GM10248 (cell line): ENCODE measurements at regions of chr2 and their contacts with region 1.

Region 1: DNA sequence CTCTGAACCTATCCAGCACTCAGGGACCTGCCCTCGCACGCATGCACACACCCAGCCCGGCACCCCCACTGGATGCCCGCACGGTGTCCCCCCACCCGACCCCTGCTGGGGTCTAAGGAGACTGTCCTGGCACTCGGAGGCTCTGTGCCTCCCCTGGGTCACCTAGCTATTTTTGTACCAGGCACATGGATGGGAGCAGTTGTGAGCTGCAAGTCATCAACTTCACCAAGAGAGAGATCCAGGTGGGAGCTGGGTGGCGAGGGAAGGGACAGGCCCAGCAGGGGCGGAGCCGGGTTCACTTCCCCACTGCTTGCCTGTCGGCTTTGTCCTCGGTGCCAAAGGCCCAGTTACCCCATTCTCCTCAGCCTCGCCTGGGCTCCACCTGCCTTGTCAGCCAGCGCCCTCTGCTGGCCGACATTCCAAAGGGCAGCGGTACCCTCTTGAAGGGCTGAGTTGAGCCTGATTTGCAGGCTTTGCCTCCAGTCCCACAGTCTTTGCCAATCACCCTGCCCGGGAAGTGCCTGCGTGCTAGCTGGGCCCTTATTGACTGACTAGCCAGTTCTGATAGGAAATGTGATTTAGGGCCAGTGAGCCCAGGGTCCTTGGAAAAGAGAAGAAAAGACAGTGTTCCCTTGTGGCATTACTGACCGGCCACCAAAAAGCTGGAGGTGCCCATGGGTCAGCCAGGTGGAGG is 5.8 kb downstream of the NT5DC4 start:
- DNase-seq: peak; percentile 93
- CTCF ChIP-seq: peak; percentile 99

Region 2: DNA sequence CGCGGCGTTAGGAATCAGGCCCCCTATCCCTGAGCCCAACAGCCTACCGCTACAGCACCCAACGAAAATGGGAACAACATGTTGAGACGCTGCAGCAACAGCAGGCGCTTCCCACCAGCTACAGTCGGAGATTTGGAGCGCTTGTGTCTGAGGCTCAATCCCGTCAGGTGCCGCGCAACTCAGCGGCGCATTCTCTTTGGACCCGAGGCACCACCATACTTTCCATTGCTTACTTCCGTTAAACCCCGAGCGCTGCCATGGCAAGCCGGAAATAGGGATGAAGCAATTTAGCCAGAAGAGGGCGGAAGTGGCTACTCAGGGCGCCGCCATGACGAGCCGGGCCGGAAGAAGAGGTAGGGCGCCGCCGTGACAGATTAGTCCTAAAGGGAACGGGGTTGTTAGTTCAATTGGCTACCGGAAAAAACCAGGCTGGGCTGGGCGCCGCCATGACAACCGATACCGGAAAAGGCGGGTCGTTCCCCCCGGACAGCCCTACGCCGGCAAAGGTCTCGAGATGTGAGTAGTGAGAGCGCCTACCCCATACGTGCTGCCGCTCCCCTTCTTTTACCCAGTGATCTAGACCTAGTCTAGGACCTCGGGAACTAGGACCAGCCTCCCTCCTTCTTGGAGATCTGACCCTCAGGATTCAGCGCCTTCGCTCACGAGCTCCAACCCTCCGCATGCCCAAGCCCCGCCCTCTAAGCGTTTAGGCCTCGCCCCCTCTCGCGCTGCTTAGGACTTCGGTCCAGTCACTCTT is 142.3 kb before region 1 on chr2 and contains the start of gene CHCHD5:
- CTCF ChIA-PET with region 1: interaction called, 40 read pairs
- POLR2A ChIA-PET with region 1: no interaction called
- DNase-seq: peak; percentile 91
- CTCF ChIP-seq: no peak

Region 3: GRCh38 chr2:112626604-112627059 is 100.0 kb before region 1 on chr2:
- CTCF ChIA-PET with region 1: interaction called, 416 read pairs
- POLR2A ChIA-PET with region 1: no interaction called
- DNase-seq: peak; percentile 70
- CTCF ChIP-seq: peak; percentile 93

Region 4: GRCh38 chr2:112666764-112667122 is 59.9 kb before region 1 on chr2:
- CTCF ChIA-PET with region 1: interaction called, 21 read pairs
- POLR2A ChIA-PET with region 1: interaction called, 3 read pairs
- DNase-seq: no peak
- CTCF ChIP-seq: no peak

Region 5: DNA sequence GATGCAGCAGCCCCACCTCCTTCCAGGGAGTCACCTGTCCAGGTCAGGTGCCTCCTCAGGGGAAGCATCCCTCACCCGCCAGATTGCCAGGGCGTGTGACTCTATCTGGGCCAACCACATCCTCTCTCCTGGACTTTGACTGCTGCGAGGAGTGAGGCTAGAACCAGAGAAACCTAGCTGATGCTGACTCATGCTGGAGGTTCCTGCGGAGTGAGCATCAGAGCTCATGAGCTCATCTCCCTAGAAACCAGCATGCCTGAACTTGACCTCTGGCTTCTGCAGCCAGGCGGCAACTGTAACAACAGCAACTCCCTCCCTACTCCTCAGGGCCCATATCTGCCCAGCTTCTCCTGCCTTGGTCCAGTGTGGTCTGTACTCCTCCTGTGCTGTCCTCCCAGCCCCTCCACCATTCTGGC is 34.1 kb before region 1 on chr2:
- CTCF ChIA-PET with region 1: interaction called, 37 read pairs
- POLR2A ChIA-PET with region 1: no interaction called
- DNase-seq: peak; percentile 82
- CTCF ChIP-seq: no peak

Region 6: GRCh38 chr2:112712903-112713584 is 13.6 kb before region 1 on chr2:
- CTCF ChIA-PET with region 1: interaction called, 99 read pairs
- POLR2A ChIA-PET with region 1: interaction called, 5 read pairs
- DNase-seq: no peak
- CTCF ChIP-seq: no peak

Region 7: DNA sequence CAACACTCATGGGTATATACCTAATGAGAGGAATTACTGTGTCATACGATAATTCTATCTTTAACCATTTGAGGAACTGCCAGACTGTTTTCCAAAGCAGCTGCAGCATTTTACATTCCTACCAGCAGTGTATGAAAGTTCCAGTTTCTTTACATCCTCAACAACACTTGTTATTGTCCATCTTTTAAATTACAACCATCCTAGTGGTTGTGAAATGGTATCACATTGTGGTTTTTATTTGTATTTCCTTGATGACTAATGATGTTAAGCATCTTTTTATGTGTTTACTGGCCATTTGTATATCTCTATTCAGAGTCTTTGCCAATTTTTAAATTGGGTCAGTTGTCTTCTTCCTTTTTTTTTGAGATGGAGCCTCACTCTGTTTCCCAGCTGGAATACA is 41.8 kb after region 1 on chr2:
- CTCF ChIA-PET with region 1: no interaction called
- POLR2A ChIA-PET with region 1: no interaction called
- DNase-seq: no peak
- CTCF ChIP-seq: no peak

Region 8: DNA sequence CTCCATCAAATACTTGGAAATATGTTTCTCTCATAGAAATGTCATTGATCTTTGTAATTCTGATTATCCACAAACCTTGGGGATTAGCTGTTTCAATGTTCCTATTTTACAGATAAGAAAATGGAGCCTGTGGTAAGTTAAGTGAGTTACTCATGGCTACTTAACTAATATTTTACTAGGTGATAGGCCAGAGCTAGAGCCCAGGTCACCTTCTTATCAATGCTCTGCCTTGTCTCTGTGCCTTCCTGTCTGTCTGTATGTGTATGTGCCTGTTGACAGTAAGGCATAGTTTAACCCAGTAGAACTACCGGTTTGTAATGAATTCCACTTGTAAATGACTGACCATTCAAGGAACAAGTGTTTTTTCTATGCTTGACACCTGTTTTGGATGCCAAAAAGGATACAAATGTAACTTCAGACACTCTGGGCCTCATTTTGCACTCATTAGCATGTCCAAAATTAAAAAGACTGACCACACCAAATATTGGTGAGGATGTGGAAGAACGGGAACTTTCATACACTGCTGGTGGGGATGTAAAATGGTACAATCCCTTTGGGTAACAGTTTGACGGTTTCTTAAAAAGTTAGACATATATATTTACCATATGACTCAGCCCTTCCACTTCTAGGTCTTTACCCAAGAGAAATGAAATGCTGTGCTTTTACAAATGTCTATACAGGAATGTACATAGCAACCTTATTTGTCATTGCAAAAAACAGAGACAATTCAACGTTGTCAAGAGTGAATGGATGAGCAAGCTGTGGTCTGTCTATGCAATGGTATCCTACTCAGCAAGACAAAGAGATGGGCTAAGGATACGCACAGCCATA is 77.3 kb after region 1 on chr2:
- CTCF ChIA-PET with region 1: no interaction called
- POLR2A ChIA-PET with region 1: no interaction called
- DNase-seq: no peak
- CTCF ChIP-seq: no peak

Region 9: GRCh38 chr2:112941753-112942658 is 215.4 kb after region 1 on chr2:
- CTCF ChIA-PET with region 1: interaction called, 56 read pairs
- POLR2A ChIA-PET with region 1: no interaction called
- DNase-seq: peak; percentile 76
- CTCF ChIP-seq: peak; percentile 98